ENCODE measurements at regions of chr12 and their contacts with region 1.

Region 1: GRCh38 chr12:53414756-53415417 is 8.8 kb upstream of the AMHR2 start:
- DNase-seq: no peak
- H3K4me3 Mint-ChIP-seq: no peak overlapping the region
- H3K27ac Mint-ChIP-seq: no peak overlapping the region
- H3K4me1 Mint-ChIP-seq: peaks cover 39% of the 10 kb centered on the region
- H3K27me3 Mint-ChIP-seq: no peaks in the 10 kb centered on the region

Region 2: GRCh38 chr12:53379389-53380103 is 35.3 kb before region 1 on chr12:
- intact Hi-C with region 1: loop called (anchors 2 kb)
- DNase-seq: peak; percentile 98
- H3K4me3 Mint-ChIP-seq: no peak overlapping the region
- H3K27ac Mint-ChIP-seq: no peak overlapping the region
- H3K4me1 Mint-ChIP-seq: peaks cover 35% of the 10 kb centered on the region
- H3K27me3 Mint-ChIP-seq: no peaks in the 10 kb centered on the region